Left ventricle myocardium superior (tissue), 1 donor: ENCODE measurements at regions of chr17 and their contacts with region 1.

Region 1: DNA sequence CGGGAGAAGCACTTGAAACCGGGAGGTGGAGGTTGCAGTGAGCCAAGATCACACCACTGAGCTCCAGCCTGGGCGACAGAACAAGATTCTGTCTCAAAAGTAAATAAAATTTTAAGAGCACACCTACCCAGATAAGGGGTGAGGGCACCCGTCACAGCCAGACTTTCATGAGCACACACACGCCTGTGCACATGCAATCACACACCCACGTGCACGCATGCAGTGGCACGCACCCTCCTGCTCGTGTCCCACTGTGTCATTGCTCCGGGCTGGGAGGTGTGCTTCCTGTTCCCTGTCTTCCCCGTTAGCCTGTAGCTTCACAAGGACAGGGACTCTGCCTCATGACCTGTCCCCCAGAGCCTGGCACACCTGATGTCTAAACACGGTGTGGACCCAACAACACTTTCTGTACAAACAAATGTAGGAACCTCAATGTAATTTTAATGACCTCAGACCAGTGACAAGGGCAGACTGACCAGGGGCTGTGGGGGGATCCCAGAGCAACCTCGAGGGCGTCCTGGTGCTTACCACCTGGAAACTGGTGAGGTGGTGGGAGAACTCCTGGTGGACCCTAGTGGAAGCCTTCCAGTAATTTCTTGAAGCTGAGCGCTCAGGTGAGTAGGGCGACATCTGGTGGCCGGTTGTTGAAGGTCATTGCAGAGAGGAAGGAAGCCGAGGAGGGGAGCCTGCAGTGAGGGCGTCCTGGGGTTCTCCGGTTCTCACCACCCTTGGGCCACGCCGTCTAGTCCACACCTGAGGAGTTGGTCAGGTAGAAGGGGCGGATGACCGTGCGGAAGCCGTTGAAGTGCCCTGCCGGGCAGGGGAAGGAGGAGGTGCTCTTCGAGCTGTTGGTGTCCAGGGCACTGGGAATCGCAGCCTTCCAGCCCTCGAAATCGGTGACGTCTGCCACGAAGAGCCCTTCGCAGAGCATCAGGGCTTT is 8.6 kb downstream of the LGALS3BP start:
- DNase-seq: peak; percentile 90
- ATAC-seq: peak; percentile 51

Region 2: GRCh38 chr17:78873519-78874340 is 97.4 kb before region 1 on chr17:
- intact Hi-C with region 1: loop called (anchors 5 kb)
- DNase-seq: peak; percentile 66
- ATAC-seq: peak; percentile 71

Region 3: GRCh38 chr17:78925234-78925633 is 45.9 kb before region 1 on chr17 and contains the start of gene TIMP2:
- intact Hi-C with region 1: loop called (anchors 10 kb)
- DNase-seq: peak; percentile 93
- ATAC-seq: peak; percentile 77
- total RNA-seq, gene TIMP2: 132 TPM

Region 4: GRCh38 chr17:79087428-79088143 is 116.5 kb after region 1 on chr17:
- intact Hi-C with region 1: no loop called
- DNase-seq: peak; percentile 82
- ATAC-seq: peak; percentile 69